T-cell (primary cell): ENCODE measurements at regions of chr2 and their contacts with region 1.

Region 1: DNA sequence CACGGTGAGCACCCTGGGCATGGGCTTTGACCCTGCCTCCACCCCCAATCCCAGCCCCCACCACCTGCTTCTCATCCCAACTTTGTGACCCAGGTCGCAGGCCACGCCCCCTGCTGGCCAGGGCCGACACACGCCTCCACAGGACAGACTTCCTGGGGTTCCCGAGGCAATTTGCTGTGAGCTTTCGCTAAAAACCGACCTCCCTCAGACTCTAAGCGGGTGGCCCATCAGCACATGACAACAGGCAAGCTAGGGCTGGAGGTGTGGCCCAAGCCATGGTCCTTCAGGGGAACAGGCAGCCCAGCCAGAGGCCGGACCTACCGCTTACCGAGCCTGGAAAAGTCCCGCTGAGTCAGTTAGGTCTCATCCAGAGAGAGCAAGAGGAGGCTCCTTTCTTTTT is 31.9 kb downstream of the C1QL2 start:
- DNase-seq: peak in 24 of 35 experiments; percentile 3 to 42 (median 12)
- ATAC-seq: no peak
- H3K4me3 ChIP-seq: no peak overlapping the region
- H3K4me3 Mint-ChIP-seq: no peak overlapping the region
- H3K27ac ChIP-seq: no peak overlapping the region
- H3K27ac Mint-ChIP-seq: no peak overlapping the region
- H3K4me1 ChIP-seq: peaks cover 0 to 4% of the 10 kb centered on the region in 2 experiments
- H3K4me1 Mint-ChIP-seq: peaks cover 0 to 2% (median 2%) of the 10 kb centered on the region in 3 donors
- H3K27me3 ChIP-seq: peaks cover 0 to 47% of the 10 kb centered on the region in 2 experiments
- H3K27me3 Mint-ChIP-seq: peaks cover 19 to 24% of the 10 kb centered on the region in 2 donors

Region 2: GRCh38 chr2:118459424-118459823 is 667.2 kb before region 1 on chr2:
- CTCF ChIA-PET with region 1: interaction called in 1 of 2 experiments, 11 read pairs
- POLR2A ChIA-PET with region 1: no interaction called
- DNase-seq: no peak
- ATAC-seq: no peak
- H3K4me3 ChIP-seq: no peak overlapping the region
- H3K4me3 Mint-ChIP-seq: no peak overlapping the region
- H3K27ac ChIP-seq: no peak overlapping the region
- H3K27ac Mint-ChIP-seq: no peak overlapping the region
- H3K4me1 ChIP-seq: no peaks in the 10 kb centered on the region
- H3K4me1 Mint-ChIP-seq: no peaks in the 10 kb centered on the region
- H3K27me3 ChIP-seq: peaks cover 0 to 13% of the 10 kb centered on the region in 2 experiments
- H3K27me3 Mint-ChIP-seq: peaks cover 27% of the 10 kb centered on the region in 2 donors

Region 3: GRCh38 chr2:118732432-118732831 is 394.2 kb before region 1 on chr2:
- CTCF ChIA-PET with region 1: no interaction called
- POLR2A ChIA-PET with region 1: no interaction called
- DNase-seq: no peak
- ATAC-seq: no peak
- H3K4me3 ChIP-seq: no peak overlapping the region
- H3K4me3 Mint-ChIP-seq: no peak overlapping the region
- H3K27ac ChIP-seq: no peak overlapping the region
- H3K27ac Mint-ChIP-seq: no peak overlapping the region
- H3K4me1 ChIP-seq: no peaks in the 10 kb centered on the region
- H3K4me1 Mint-ChIP-seq: no peaks in the 10 kb centered on the region
- H3K27me3 ChIP-seq: no peaks in the 10 kb centered on the region
- H3K27me3 Mint-ChIP-seq: peaks cover 3 to 13% of the 10 kb centered on the region in 2 donors

Region 4: DNA sequence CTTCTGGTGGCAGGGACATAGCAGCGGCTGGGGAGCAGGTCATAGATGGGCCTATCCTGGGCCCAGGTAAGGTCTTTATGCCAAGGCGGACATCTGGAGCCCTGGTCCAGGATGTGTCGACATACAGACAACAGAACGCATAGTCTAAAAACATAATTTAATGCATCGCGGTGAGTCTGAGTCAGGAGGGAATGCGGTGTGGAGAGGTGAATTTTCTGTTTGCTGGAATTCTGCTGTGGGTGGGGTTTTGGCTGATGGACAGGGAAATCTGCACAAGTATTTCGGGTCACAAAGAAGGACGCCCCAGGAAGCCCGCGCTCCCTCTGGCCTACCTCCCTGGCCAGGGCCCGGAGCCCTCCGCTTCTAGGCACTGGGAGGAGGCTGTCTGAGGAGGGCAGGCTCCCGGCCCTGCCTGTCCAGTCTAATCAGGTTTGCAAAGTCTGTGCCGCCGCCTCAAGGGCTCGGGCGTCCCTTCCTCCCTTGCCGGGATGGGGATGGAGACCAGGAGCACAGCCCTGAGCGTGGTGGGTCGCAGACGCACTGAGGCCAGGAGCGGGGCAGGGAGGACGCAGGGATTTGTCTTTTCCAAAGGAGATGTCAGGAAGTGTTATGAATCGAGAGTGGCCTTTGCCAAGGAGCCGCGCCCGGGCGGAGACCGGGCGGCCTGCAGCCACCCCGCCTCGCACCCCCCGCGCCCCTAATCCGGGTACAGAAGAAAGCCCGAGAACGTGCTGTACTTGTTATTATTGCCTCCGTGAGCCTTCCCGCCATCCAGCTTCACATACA is 29.6 kb after region 1 on chr2:
- CTCF ChIA-PET with region 1: no interaction called
- POLR2A ChIA-PET with region 1: no interaction called
- DNase-seq: no peak
- ATAC-seq: no peak
- H3K4me3 ChIP-seq: no peak overlapping the region
- H3K4me3 Mint-ChIP-seq: no peak overlapping the region
- H3K27ac ChIP-seq: no peak overlapping the region
- H3K27ac Mint-ChIP-seq: no peak overlapping the region
- H3K4me1 ChIP-seq: no peaks in the 10 kb centered on the region
- H3K4me1 Mint-ChIP-seq: peaks cover 0 to 3% (median 2%) of the 10 kb centered on the region in 3 donors
- H3K27me3 ChIP-seq: peaks cover 4 to 60% of the 10 kb centered on the region in 2 experiments
- H3K27me3 Mint-ChIP-seq: peaks cover 44 to 66% of the 10 kb centered on the region in 2 donors